SK-N-SH (cell line): ENCODE measurements at regions of chr1 and their contacts with region 1.

Region 1: DNA sequence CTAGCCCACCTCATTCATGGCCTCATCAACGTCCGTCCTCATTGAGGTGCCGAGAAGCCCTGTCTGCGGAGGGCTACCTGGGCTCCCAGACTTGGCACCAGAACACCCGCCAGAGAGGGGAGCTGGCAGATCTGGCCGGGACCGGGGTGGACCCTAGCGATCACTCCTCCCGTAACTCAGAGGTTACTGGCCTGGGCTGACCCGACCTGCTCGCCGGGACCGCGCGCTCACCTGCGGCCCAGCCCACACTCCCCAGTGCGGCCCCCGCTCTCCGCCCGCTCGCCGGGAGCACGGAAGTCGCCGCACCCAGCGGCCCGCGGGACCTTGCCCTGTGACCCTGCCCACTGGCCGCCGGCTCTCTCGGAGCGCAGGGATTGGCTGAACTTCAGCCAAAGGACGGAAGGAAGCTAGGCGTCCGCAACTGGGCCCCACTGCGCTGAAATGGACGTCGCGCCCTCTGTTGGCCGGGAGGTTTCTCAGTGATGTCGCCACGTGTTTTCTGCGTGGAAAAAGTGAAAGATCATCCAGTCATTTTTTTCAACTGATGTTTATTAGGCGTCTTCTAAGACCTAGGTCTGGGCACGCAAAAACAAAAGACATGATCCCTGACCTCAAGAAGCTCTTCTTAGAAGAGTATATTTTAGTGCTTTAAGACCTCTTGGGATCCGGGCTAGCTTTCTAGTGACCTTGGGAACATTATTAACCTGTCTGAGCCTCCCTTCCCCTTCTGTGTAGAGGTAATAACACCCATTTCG is at the start of gene SMIM12:
- DNase-seq: peak; percentile 99
- H3K4me3 ChIP-seq: peak within 1 kb of the TSS; percentile 88 to 100
- H3K27ac ChIP-seq: peak within 1 kb of the TSS; percentile 50 to 69; a peak in 3 of 4 replicates
- H3K4me1 ChIP-seq: peaks cover 9 to 16% of the 10 kb centered on the region in 2 experiments; a peak in 3 of 4 replicates
- H3K27me3 ChIP-seq: no peaks in the 10 kb centered on the region
- CTCF ChIP-seq: peak; percentile 90
- EP300 ChIP-seq: no peak
- RAD21 ChIP-seq: peak; percentile 39
- polyA plus RNA-seq, gene SMIM12: 42.3 and 46.7 TPM in 2 replicates

Region 2: GRCh38 chr1:34924759-34925555 is 65.3 kb after region 1 on chr1:
- CTCF ChIA-PET with region 1: interaction called, 15 read pairs
- POLR2A ChIA-PET with region 1: no interaction called
- DNase-seq: no peak
- H3K4me3 ChIP-seq: no peak overlapping the region
- H3K27ac ChIP-seq: no peak overlapping the region
- H3K4me1 ChIP-seq: peaks cover 0 to 3% of the 10 kb centered on the region in 2 experiments; a peak in 1 of 4 replicates
- H3K27me3 ChIP-seq: peaks cover 15% of the 10 kb centered on the region
- CTCF ChIP-seq: no peak
- EP300 ChIP-seq: no peak
- RAD21 ChIP-seq: no peak

Region 3: DNA sequence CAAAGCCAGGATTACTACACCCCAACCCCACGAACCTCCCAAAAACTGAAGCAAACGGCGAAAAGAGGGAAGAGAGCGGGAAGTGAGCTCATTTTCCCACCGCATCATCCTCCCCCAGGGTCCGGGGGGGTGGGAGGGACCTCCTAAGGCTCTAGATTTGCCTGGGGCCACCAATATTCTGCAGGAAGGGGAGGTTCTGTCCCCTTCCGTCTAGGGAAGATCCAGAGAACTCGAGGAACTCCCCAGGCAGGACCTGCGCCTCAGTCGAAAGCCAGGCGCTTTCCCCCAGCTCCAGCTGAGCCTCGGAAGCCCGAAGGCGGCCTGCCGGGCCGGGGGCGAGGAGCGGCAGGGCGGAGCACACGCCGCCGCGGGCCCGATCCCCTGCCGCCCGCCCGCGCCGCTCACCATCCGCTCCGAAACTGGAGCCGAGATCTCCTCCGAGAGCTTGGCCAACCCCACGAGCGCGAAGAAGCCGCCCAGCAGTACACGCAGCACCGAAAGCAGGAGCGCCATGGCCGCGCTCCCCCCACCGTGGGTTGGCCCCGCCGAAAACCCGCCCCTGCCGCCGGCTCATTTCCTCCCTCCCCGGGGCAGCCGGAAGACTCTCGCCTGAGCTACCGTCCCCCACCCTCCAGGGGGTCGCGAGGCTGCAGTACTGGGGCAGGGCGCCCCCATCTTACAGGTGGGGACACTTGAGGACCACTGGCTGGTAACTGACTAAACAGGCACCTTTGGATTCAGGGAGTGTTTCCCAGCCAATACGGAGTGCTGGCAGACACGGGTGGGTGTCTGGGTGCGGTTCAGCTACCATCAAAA is 125.4 kb after region 1 on chr1 and contains the start of gene TMEM35B:
- CTCF ChIA-PET with region 1: interaction called, 12 read pairs
- POLR2A ChIA-PET with region 1: interaction called, 4 read pairs
- DNase-seq: peak; percentile 87
- H3K4me3 ChIP-seq: peak within 1 kb of the TSS; percentile 83 to 93
- H3K27ac ChIP-seq: peak within 1 kb of the TSS; percentile 81 to 82
- H3K4me1 ChIP-seq: peaks cover 13% of the 10 kb centered on the region in 2 experiments; a peak in 2 of 4 replicates
- H3K27me3 ChIP-seq: no peaks in the 10 kb centered on the region
- CTCF ChIP-seq: peak; percentile 20
- EP300 ChIP-seq: no peak; a peak in 1 of 4 replicates
- RAD21 ChIP-seq: no peak
- polyA plus RNA-seq, gene TMEM35B: 47.4 and 61.7 TPM in 2 replicates